ENCODE measurements at regions of chr20 and their contacts with region 1.

Region 1: DNA sequence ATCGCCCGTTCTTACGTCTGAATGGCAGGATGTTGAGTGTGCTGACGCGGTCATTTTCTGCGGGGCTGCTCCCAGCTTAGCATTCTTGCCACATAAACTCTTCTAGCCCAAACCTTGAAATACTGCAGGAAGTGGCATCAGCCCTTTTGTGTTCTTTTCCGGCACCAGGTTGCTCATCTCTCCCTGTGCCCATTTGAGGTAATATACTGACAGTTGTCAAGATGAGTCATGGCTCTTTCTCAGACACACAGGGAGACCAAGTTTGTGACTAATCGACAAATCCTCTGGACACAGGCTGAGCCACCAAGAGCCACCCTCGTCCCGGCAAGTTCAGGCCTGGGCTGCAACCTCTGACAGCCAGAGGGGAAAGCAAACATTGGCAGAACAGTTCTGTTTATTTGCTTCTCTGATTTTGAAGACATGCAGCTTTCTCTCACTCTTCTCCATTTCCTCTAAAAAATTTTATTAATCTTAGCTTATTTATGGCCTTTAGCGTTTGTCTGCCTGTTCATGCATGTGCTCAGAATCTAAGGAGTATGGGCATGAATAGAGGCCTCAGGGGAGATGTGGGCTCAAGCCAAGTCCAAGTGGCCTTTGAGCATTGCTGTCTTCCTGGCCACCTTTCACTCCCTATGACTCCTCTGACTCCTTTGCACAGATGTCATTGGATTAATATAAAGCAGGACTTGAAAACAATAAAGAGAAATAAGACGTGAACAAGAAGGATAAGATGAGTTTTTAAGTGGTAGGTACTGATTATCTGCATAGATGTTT is 328.2 kb upstream of the JAG1 start:
- DNase-seq: peak; percentile 99
- H3K4me3 ChIP-seq: no peak overlapping the region
- H3K27ac ChIP-seq: peak overlapping the region; percentile 89
- H3K4me1 ChIP-seq: peaks cover 35% of the 10 kb centered on the region
- H3K27me3 ChIP-seq: no peaks in the 10 kb centered on the region
- CTCF ChIP-seq: no peak

Region 2: GRCh38 chr20:10731190-10731965 is 270.6 kb before region 1 on chr20:
- CTCF ChIA-PET with region 1: no interaction called
- dilution Hi-C with region 1: no loop called
- in situ Hi-C with region 1: no loop called
- intact Hi-C with region 1: loop called (anchors 2 kb)
- DNase-seq: peak; percentile 64
- H3K4me3 ChIP-seq: no peak overlapping the region
- H3K27ac ChIP-seq: peak overlapping the region; percentile 64
- H3K4me1 ChIP-seq: peaks cover 47% of the 10 kb centered on the region
- H3K27me3 ChIP-seq: no peaks in the 10 kb centered on the region
- CTCF ChIP-seq: no peak

Region 3: GRCh38 chr20:10922941-10923340 is 79.0 kb before region 1 on chr20:
- CTCF ChIA-PET with region 1: interaction called, 3 read pairs
- dilution Hi-C with region 1: no loop called
- in situ Hi-C with region 1: no loop called
- intact Hi-C with region 1: loop called (anchors 5 kb)
- DNase-seq: peak; percentile 80
- H3K4me3 ChIP-seq: no peak overlapping the region
- H3K27ac ChIP-seq: peak overlapping the region; percentile 64
- H3K4me1 ChIP-seq: peaks cover 56% of the 10 kb centered on the region
- H3K27me3 ChIP-seq: no peaks in the 10 kb centered on the region
- CTCF ChIP-seq: no peak

Region 4: DNA sequence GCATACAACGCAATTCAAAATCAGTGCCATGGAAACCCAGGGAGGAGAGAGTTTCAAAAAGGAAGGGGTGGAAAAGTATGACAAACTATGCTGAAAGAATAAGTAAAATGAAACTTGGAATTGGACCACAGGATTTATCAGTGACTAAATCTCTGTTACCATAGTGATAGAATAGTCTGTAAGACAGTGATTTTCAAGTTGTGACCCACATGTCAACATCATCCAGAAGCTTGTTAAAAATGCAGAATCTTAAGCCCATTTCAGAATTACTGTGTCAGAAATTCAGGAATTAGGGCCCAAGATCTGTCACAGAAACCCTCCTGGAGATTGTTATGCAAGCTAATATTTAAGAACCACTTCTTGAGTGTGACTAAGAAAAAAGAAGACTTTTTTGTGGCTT is 89.6 kb after region 1 on chr20:
- CTCF ChIA-PET with region 1: no interaction called
- dilution Hi-C with region 1: no loop called
- in situ Hi-C with region 1: no loop called
- intact Hi-C with region 1: no loop called
- DNase-seq: peak; percentile 34
- H3K4me3 ChIP-seq: no peak overlapping the region
- H3K27ac ChIP-seq: no peak overlapping the region
- H3K4me1 ChIP-seq: peaks cover 4% of the 10 kb centered on the region
- H3K27me3 ChIP-seq: no peaks in the 10 kb centered on the region
- CTCF ChIP-seq: no peak

Region 5: GRCh38 chr20:11117808-11118528 is 116.0 kb after region 1 on chr20:
- CTCF ChIA-PET with region 1: no interaction called
- dilution Hi-C with region 1: no loop called
- in situ Hi-C with region 1: no loop called
- intact Hi-C with region 1: loop called (anchors 5 kb)
- DNase-seq: peak; percentile 99
- H3K4me3 ChIP-seq: no peak overlapping the region
- H3K27ac ChIP-seq: peak overlapping the region; percentile 99
- H3K4me1 ChIP-seq: peaks cover 33% of the 10 kb centered on the region
- H3K27me3 ChIP-seq: no peaks in the 10 kb centered on the region
- CTCF ChIP-seq: peak in 1 of 2 donors; percentile 0

Region 6: GRCh38 chr20:11204926-11205768 is 203.2 kb after region 1 on chr20:
- CTCF ChIA-PET with region 1: no interaction called
- dilution Hi-C with region 1: no loop called
- in situ Hi-C with region 1: no loop called
- intact Hi-C with region 1: loop called (anchors 5 kb)
- DNase-seq: peak; percentile 69
- H3K4me3 ChIP-seq: no peak overlapping the region
- H3K27ac ChIP-seq: peak overlapping the region; percentile 65
- H3K4me1 ChIP-seq: peaks cover 46% of the 10 kb centered on the region
- H3K27me3 ChIP-seq: no peaks in the 10 kb centered on the region
- CTCF ChIP-seq: peak; percentile 84 to 95

Measured in mammary epithelial cell (primary cell).